ENCODE measurements at regions of chr18 and their contacts with region 1.

Region 1: GRCh38 chr18:26383454-26384270 is 157.4 kb downstream of the TAF4B start:
- H3K4me3 ChIP-seq: no peak overlapping the region
- H3K27ac ChIP-seq: no peak overlapping the region
- H3K4me1 ChIP-seq: no peaks in the 10 kb centered on the region
- CTCF ChIP-seq: no peak

Region 2: DNA sequence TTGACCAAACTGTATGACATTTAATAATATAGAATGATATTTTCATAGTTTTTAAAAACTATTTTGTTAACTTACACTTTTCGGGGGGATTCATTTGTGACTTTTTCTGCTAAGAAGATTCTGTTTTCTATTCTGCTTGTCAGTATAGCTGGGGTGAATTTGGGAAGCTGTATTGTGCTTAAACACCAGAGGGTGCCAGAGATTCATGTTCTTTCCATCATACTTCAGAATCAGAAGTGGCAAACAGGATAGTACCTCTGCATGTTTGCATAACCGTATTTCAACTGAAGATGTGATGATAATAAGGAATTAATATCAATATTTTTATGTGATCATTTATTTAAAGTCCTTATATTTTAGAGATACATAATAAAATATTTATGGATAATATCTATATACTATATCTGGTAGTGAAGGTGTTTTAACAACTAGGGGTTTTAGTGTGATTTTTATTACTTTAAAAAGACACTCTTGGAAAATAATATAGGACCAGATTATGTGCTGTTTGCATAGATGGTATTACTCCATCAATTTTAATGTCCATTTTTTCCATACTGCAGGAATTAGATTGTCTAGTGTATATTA is 76.4 kb before region 1 on chr18:
- CTCF ChIA-PET with region 1: interaction called, 15 read pairs
- POLR2A ChIA-PET with region 1: no interaction called
- H3K4me3 ChIP-seq: no peak overlapping the region
- H3K27ac ChIP-seq: no peak overlapping the region
- H3K4me1 ChIP-seq: no peaks in the 10 kb centered on the region
- CTCF ChIP-seq: no peak

Region 3: GRCh38 chr18:26370037-26370436 is 13.6 kb before region 1 on chr18:
- CTCF ChIA-PET with region 1: interaction called, 24 read pairs
- POLR2A ChIA-PET with region 1: no interaction called
- H3K4me3 ChIP-seq: no peak overlapping the region
- H3K27ac ChIP-seq: no peak overlapping the region
- H3K4me1 ChIP-seq: no peaks in the 10 kb centered on the region
- CTCF ChIP-seq: no peak

Region 4: DNA sequence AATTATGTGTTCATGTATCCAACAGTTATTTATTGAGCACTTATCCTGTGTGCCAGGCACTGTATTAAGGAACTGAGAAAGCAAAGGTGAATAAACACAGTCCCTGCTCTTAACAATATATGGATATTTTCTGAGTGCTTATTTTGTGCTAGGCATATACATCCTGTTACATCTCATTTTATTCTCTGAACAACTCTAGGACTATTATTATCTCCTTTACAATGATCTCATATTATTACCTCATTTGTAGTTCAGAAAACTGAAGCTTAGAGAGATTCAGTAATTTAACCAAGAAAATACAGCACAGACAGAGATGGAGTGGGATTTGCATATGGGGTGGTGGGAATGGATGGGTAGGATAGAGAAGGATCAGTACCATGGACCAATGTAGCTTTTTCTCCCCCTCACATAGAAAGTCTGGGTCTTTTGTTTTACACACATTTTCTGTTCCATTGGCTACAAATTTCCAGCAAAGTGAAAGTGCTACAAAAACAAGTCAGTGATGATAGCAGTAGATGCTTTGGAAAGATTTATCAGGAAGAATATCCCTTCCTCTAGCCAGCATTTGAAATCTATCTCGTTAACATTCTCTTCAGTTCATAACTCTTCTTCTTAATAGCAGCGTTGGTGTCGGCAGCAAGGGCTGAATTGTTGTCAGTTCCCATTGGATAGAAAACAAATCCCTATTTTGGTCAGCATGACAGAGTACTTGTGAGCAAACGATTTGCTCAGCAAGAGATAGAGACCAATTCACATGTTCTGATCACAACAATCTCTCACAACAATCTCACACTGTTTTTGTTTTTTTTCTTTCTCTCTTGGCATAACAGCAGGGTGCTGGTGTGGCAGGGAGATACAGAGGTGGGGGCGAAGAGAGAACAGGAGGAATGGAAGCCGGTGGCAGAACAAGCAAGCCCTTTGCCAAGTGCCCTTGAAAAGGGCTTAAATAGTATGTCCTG is 266.9 kb after region 1 on chr18:
- CTCF ChIA-PET with region 1: interaction called, 10 read pairs
- POLR2A ChIA-PET with region 1: no interaction called
- H3K4me3 ChIP-seq: no peak overlapping the region
- H3K27ac ChIP-seq: no peak overlapping the region
- H3K4me1 ChIP-seq: peaks cover 11% of the 10 kb centered on the region
- CTCF ChIP-seq: no peak